PC-9 (cell line): ENCODE measurements at regions of chr9 and their contacts with region 1.

Region 1: DNA sequence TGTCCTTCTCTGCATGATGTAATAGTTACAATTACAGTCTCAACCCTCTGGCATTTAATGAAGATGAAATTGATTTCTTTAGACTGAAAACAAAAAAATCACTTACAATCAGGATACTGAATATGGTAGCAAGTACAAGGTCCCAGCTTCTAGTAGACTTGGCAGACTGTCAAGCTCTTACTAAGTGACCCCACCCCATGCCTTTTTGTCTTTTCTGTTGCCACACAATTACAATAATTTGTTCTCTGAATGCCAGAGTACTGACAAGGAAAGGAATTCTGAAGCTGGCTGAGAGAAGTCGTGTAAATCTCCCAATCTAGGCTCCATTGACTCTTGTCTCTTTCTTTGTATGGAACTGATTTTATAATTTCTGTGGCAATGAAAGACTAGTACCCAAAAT is 154.2 kb downstream of the TMC1 start:
- DNase-seq: peak; percentile 43 to 49
- H3K4me3 ChIP-seq: no peak overlapping the region
- H3K27ac ChIP-seq: no peak overlapping the region
- H3K4me1 ChIP-seq: peaks cover 5% of the 10 kb centered on the region; the same call in 1 of the 2 replicates
- H3K27me3 ChIP-seq: no peaks in the 10 kb centered on the region
- CTCF ChIP-seq: no peak

Region 2: GRCh38 chr9:72600671-72601070 is 74.9 kb before region 1 on chr9:
- CTCF ChIA-PET with region 1: no interaction called
- POLR2A ChIA-PET with region 1: interaction called, 10 read pairs
- intact Hi-C with region 1: no loop called
- DNase-seq: no peak
- H3K4me3 ChIP-seq: no peak overlapping the region
- H3K27ac ChIP-seq: no peak overlapping the region
- H3K4me1 ChIP-seq: no peaks in the 10 kb centered on the region
- H3K27me3 ChIP-seq: no peaks in the 10 kb centered on the region
- CTCF ChIP-seq: no peak